AG04449 (cell line): ENCODE measurements at regions of chr10 and their contacts with region 1.

Region 1: GRCh38 chr10:118241229-118242137 is 100.6 kb downstream of the FAM204A start:
- DNase-seq: peak; percentile 40
- H3K4me3 ChIP-seq: no peak overlapping the region
- CTCF ChIP-seq: peak; percentile 83

Region 2: DNA sequence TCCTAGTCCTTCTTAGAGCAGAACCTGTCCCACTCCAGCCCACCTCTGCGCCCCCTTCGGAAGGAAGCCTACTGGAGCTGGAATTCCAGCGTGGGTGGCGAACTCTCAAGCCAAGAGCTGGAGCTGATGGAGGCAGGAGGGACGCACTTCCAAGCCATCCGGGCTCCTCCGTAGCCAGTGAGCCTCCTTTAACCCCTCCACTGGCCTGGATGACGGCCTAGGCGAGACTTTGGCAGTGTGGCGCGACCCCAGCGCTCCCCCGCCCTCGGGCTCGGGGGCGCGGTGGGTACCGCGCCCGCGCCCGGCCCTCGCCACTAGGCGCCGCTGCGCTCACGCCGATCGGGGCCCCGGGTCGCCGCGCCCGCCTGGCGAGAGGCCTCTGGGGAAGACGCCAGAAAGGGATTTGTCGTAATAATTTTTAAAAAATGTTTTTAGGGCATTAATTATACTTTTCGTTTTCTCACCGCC is 704.0 kb before region 1 on chr10:
- CTCF ChIA-PET with region 1: interaction called, 73 read pairs
- POLR2A ChIA-PET with region 1: no interaction called
- DNase-seq: no peak
- H3K4me3 ChIP-seq: peak overlapping the region; percentile 38
- CTCF ChIP-seq: peak; percentile 47

Region 3: DNA sequence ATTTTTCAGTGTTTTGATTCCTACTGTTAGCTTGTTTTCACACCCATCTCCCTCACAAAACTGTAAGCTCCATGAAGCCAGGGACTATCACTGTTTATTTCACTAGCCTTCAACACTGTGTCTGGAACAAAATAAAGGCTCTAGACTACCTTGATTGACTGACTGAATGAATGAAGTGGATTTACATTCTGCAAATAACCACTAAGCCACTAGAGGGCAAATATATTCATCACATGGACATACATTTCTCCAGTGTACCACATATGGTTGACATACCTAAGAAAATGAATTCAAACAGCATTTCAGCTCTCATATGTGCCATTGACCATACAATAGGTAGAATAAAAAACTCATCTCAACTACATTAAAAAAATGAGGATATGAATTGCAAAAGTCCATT is 380.7 kb before region 1 on chr10:
- CTCF ChIA-PET with region 1: interaction called, 13 read pairs
- POLR2A ChIA-PET with region 1: no interaction called
- DNase-seq: no peak
- H3K4me3 ChIP-seq: no peak overlapping the region
- CTCF ChIP-seq: peak; percentile 32

Region 4: GRCh38 chr10:118007773-118008172 is 233.7 kb before region 1 on chr10:
- CTCF ChIA-PET with region 1: no interaction called
- POLR2A ChIA-PET with region 1: no interaction called
- DNase-seq: no peak
- H3K4me3 ChIP-seq: no peak overlapping the region
- CTCF ChIP-seq: no peak